ENCODE measurements at regions of chr10 and their contacts with region 1.

Region 1: DNA sequence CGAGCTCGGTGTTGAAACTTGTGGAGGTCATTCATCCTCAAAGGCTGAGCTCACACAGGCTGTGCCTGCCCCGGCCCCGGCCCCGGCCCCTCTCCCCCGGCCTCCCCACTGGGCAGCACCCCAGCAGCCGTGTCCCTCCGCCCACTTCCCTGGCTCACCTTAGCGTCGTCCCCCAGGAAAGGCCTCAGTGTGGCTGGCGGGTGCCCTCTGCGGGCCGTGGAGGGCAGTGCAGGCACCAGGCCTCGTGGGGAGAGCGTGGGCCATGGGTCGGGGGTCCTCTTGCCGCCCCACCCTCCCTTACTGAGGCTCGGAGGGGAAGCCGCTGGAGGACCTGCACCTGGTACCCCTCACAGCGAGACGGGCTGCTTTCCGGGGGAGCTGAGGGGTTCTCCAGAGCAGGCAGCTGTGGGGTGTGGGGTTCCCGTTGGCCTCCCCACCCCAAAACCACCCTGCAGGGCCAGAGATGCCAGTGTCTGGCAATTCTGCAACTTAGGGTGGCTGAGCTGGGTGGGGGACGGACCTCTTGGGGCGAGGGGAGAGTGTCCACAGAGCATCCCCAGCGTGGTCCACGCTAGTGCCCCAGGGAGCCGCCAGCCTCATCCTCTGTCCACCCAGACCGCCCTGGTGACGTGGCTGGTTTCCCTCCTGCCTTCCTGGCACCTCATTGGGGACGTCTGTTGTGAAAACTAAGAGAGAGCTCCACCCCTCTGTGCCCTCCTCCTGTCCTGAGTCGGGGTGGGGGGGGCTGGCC is 44.2 kb upstream of the DPYSL4 start:
- DNase-seq: peak; percentile 25 to 64 (median 48)
- H3K4me3 ChIP-seq: no peak overlapping the region
- H3K27ac ChIP-seq: no peak overlapping the region
- H3K4me1 ChIP-seq: no peaks in the 10 kb centered on the region
- H3K27me3 ChIP-seq: no peaks in the 10 kb centered on the region
- CTCF ChIP-seq: peak; percentile 55 to 90 (median 79)
- POLR2A ChIP-seq: no peak

Region 2: DNA sequence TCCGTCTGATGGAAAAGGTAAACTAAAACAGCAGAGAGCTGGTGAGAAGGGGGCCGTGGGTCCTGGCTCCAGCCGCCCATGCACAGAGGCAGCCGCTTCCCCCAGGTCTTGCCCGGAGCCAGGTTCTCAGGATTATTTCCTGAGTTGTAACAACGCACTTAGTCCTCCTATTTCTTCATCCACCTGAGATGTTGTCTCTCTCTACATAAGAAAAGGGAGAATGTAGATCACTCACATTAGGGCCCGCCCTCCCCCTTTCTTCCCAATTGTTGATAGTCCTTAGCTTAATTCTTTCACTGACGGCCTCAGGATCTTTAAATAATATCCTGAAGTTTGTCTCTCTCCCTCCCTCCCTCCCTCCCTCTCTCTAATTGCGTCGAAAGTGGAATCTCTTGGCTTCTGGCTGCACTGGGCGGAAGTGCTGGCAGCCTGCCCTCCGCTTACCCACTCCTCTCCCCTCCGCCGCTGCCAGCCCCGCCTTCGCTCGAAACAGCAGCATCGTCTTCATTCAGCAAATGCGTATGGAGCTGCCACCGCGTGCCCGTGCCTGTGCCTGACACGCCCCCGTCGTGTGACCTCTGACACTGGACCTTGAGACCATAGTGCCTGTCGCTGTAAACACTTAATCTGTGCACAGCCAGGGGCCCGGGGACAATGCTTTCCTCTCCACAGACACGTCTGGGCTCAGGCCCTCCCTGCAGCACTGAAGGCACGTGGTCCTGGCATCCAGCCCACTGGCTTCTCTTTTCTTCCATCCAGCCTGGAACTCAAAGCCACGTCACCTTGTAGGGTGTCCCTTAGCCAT is 416.3 kb before region 1 on chr10:
- intact Hi-C with region 1: no loop called
- DNase-seq: peak; percentile 42 to 82 (median 71)
- H3K4me3 ChIP-seq: peak overlapping the region in 1 of 4 donors; percentile 17
- H3K27ac ChIP-seq: no peak overlapping the region
- H3K4me1 ChIP-seq: no peaks in the 10 kb centered on the region
- H3K27me3 ChIP-seq: no peaks in the 10 kb centered on the region
- CTCF ChIP-seq: no peak
- POLR2A ChIP-seq: no peak

Region 3: GRCh38 chr10:132023092-132023811 is 119.3 kb before region 1 on chr10:
- intact Hi-C with region 1: loop called in 1 of 2 experiments (anchors 10 kb)
- DNase-seq: peak; percentile 69 to 91 (median 86)
- H3K4me3 ChIP-seq: peak overlapping the region in 1 of 4 donors; percentile 41
- H3K27ac ChIP-seq: no peak overlapping the region
- H3K4me1 ChIP-seq: peaks cover 4 to 7% of the 10 kb centered on the region in 2 donors
- H3K27me3 ChIP-seq: no peaks in the 10 kb centered on the region
- CTCF ChIP-seq: peak; percentile 80 to 95 (median 90)
- POLR2A ChIP-seq: no peak

Region 4: GRCh38 chr10:132036153-132036886 is 106.3 kb before region 1 on chr10:
- intact Hi-C with region 1: loop called in 1 of 2 experiments (anchors 10 kb)
- DNase-seq: peak in 2 of 7 donors; percentile 19 to 57
- H3K4me3 ChIP-seq: peak overlapping the region in 1 of 4 donors; percentile 55
- H3K27ac ChIP-seq: peak overlapping the region in 1 of 5 donors; percentile 26
- H3K4me1 ChIP-seq: peaks cover 0 to 5% of the 10 kb centered on the region in 2 donors
- H3K27me3 ChIP-seq: peaks cover 18% of the 10 kb centered on the region
- CTCF ChIP-seq: no peak
- POLR2A ChIP-seq: no peak

Region 5: DNA sequence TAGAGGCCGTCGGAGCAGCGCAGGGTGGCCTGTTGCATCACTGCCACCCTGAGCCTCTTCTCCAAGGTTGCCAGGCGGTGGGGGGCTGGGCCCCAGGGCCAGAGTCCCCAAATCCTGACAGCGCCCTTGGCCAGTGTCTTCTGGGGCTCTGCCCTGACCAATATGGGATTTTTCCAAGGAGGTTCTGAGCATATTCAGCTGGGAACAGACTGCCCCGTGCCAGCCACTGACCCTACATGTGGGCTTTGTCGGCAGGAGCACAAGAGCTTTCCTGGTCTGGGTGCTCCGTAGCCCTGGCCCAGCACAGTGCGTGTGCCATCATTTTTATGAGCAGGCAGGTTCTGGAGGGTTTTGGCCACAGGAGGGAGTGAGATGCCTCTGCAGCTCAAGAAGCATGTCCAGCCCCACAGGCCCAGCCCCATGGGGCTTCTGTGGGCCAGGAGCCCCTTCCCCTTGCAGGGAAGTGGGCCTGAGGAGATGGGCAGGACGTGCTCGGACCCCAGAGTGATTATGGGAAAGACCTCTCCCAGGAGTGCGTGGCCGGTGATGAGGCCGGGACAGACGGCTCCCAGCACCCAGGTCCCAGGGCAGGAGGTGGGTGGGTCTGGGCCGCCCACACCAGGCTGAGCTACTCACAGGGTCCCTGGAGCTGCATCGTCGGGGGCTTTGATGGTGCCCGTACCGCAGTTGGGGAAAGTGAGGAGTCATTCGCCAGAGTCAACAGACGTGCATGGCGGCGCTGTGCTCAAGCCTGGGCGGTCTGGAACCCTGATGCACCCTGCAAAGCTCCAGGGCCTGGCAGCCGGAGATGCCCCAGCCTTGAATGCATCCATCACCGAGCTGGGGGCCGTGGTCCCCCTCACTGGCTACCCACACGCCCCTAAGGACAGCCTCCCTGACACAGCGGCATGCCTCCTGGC is 321.0 kb after region 1 on chr10:
- intact Hi-C with region 1: no loop called
- DNase-seq: peak in 1 of 7 donors; percentile 7
- H3K4me3 ChIP-seq: no peak overlapping the region
- H3K27ac ChIP-seq: peak overlapping the region in 2 of 5 donors; percentile 79 to 84
- H3K4me1 ChIP-seq: peaks cover 6 to 16% of the 10 kb centered on the region in 2 donors
- H3K27me3 ChIP-seq: no peaks in the 10 kb centered on the region
- CTCF ChIP-seq: peak in 1 of 6 experiments; percentile 10
- POLR2A ChIP-seq: no peak